ENCODE measurements at regions of chr12 and their contacts with region 1.

Region 1: DNA sequence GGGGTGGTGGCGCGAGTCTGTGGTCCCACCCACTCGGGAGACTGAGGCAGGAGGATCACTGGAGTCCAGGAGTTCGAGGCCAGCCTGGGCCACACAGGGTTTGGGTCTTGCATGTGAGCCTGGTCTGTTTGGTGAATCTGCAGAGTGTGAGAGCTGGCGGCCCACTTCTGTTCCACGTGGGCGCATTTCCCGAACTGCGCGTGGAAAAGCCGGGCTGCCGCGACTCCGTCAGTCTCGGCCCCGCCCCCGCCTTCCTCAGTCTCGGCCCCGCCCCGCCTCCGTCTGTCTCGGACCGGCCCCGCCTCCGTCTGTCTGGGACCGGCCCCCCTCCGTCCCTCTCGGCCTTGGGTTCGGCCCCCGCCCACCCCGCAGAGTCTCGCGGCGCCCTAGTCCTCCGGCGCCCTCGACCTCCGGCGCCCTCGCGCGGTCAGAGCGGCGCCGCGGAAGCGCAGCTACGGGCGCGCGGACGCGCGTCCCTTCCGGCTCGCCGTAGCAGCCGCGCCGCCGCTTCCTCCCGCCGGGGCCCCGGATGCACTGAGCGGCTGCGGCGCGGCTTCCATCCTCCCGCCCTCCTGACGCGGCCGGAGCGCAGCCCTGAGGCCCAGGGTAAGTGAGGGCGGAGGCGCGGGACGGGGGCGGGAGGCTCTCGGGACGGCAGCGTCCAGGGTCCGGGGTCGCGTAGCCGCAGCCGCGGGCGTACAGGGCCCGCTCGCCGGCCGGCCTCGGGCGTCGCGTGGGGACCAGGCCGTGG is at the start of gene EP400:
- DNase-seq: peak; percentile 86 to 92 (median 90)
- H3K4me3 ChIP-seq: peak within 1 kb of the TSS; percentile 52 to 75
- H3K4me3 Mint-ChIP-seq: peak within 1 kb of the TSS; percentile 91 to 95 (median 94)
- H3K27ac ChIP-seq: peak within 1 kb of the TSS; percentile 79
- H3K27ac Mint-ChIP-seq: peak within 1 kb of the TSS; percentile 92 to 97 (median 95)
- H3K4me1 ChIP-seq: peaks cover 50% of the 10 kb centered on the region
- H3K4me1 Mint-ChIP-seq: peaks cover 24 to 55% (median 37%) of the 10 kb centered on the region in 4 donors
- H3K27me3 ChIP-seq: no peaks in the 10 kb centered on the region
- H3K27me3 Mint-ChIP-seq: no peaks in the 10 kb centered on the region
- total RNA-seq, gene EP400: 82.3 to 86.6 TPM

Region 2: DNA sequence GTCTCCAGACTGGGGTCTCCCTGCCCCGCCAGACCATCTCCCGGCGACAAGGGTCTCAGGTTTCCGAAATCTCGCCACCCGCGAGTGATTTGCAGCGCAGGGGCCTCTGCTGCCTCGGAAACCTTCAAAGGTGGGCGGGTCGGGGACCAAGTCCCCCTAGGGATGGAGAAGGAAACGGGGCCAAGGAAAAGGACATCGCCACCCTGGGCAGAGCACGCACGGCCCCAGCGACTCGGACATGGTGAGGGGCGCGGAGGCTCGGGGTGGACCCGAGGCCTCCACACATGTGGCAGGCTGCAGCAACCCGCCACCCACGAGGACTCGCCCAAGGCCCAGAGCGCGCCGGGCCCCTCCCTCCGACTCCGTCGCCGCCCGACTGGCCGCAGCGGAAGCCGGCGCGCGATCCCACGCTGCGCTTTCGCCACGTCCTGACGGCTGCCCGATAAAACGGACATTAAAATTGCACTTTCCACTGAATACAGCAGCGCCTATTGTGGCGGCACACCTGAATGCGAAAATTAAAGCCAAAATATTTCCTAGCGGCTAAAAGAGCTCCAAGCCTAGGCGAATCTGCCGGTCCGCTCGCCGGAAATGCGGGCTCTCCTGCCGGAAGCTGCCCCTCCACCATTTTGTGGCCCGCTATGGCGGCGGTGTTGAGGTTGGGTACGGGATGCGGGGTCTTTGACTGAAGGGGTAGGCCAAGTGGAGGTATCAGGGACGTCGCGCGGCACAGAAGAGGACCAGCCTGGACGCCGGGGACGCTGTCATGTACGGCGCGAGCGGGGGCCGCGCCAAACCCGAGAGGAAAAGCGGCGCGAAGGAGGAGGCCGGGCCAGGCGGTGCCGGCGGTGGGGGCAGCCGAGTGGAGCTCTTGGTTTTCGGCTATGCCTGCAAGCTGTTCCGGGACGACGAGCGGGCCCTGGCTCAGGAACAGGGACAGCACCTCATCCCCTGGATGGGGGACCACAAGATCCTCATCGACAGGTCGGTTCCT is 238.8 kb before region 1 on chr12 and contains the start of gene SFSWAP:
- CTCF ChIA-PET with region 1: no interaction called
- POLR2A ChIA-PET with region 1: interaction called, 7 read pairs
- intact Hi-C with region 1: loop called (anchors 1 kb)
- DNase-seq: peak; percentile 71 to 85 (median 77)
- H3K4me3 ChIP-seq: peak within 1 kb of the TSS; percentile 94 to 99
- H3K4me3 Mint-ChIP-seq: peak within 1 kb of the TSS; percentile 92 to 100 (median 98)
- H3K27ac ChIP-seq: peak within 1 kb of the TSS; percentile 89
- H3K27ac Mint-ChIP-seq: peak within 1 kb of the TSS; percentile 94 to 98 (median 96)
- H3K4me1 ChIP-seq: peaks cover 30% of the 10 kb centered on the region
- H3K4me1 Mint-ChIP-seq: peaks cover 20 to 40% (median 26%) of the 10 kb centered on the region in 4 donors
- H3K27me3 ChIP-seq: no peaks in the 10 kb centered on the region
- H3K27me3 Mint-ChIP-seq: no peaks in the 10 kb centered on the region
- total RNA-seq, gene SFSWAP: 95.7 to 96.8 TPM

Region 3: DNA sequence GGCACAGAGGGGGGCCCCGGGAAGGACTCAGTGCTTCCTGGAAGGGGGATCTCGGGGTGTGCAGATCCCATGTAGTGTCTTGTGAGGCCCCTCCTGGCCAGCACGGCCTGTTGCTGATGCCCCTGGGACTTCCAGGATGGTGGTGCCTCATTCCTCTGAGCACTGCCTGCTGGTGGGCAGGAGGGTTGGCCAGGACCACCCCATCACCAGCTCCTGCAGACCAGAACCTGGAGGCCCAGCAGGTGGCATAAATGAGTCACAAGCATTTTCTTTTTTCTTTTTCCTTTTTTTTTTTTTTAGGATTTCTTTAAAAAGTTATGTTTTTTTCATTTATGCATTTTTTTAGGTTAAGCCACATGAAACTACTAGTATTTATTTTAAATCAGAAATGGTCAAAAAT is 113.4 kb before region 1 on chr12:
- CTCF ChIA-PET with region 1: interaction called, 3 read pairs
- POLR2A ChIA-PET with region 1: no interaction called
- intact Hi-C with region 1: loop called (anchors 1 kb)
- DNase-seq: no peak
- H3K4me3 ChIP-seq: no peak overlapping the region
- H3K4me3 Mint-ChIP-seq: no peak overlapping the region
- H3K27ac ChIP-seq: no peak overlapping the region
- H3K27ac Mint-ChIP-seq: no peak overlapping the region
- H3K4me1 ChIP-seq: no peaks in the 10 kb centered on the region
- H3K4me1 Mint-ChIP-seq: peaks cover 0 to 2% (median under 1%) of the 10 kb centered on the region in 4 donors
- H3K27me3 ChIP-seq: peaks cover 2% of the 10 kb centered on the region
- H3K27me3 Mint-ChIP-seq: peaks cover 8 to 14% of the 10 kb centered on the region in 2 donors

Region 4: GRCh38 chr12:131894313-131894860 is 55.2 kb before region 1 on chr12 and contains the start of gene ULK1:
- CTCF ChIA-PET with region 1: no interaction called
- POLR2A ChIA-PET with region 1: interaction called, 5 read pairs
- intact Hi-C with region 1: loop called (anchors 1 kb)
- DNase-seq: peak; percentile 88 to 94 (median 91)
- H3K4me3 ChIP-seq: peak within 1 kb of the TSS; percentile 62 to 69
- H3K4me3 Mint-ChIP-seq: peak within 1 kb of the TSS; percentile 84 to 93 (median 89)
- H3K27ac ChIP-seq: peak within 1 kb of the TSS; percentile 52
- H3K27ac Mint-ChIP-seq: peak within 1 kb of the TSS; percentile 76 to 94 (median 87)
- H3K4me1 ChIP-seq: peaks cover 9% of the 10 kb centered on the region
- H3K4me1 Mint-ChIP-seq: peaks cover 6 to 35% (median 16%) of the 10 kb centered on the region in 4 donors
- H3K27me3 ChIP-seq: no peaks in the 10 kb centered on the region
- H3K27me3 Mint-ChIP-seq: no peaks in the 10 kb centered on the region
- total RNA-seq, gene ULK1: 45.8 to 55.7 TPM

Region 5: GRCh38 chr12:131928711-131929580 is 20.7 kb before region 1 on chr12 and contains the start of gene PUS1:
- CTCF ChIA-PET with region 1: no interaction called
- POLR2A ChIA-PET with region 1: interaction called, 38 read pairs
- intact Hi-C with region 1: loop called (anchors 1 kb)
- DNase-seq: peak; percentile 94 to 95 (median 95)
- H3K4me3 ChIP-seq: peak within 1 kb of the TSS; percentile 42 to 81
- H3K4me3 Mint-ChIP-seq: peak within 1 kb of the TSS; percentile 89 to 98 (median 90)
- H3K27ac ChIP-seq: peak within 1 kb of the TSS; percentile 72
- H3K27ac Mint-ChIP-seq: peak within 1 kb of the TSS; percentile 87 to 93 (median 90)
- H3K4me1 ChIP-seq: peaks cover 16% of the 10 kb centered on the region
- H3K4me1 Mint-ChIP-seq: peaks cover 8 to 34% (median 23%) of the 10 kb centered on the region in 4 donors
- H3K27me3 ChIP-seq: no peaks in the 10 kb centered on the region
- H3K27me3 Mint-ChIP-seq: no peaks in the 10 kb centered on the region
- total RNA-seq, gene PUS1: 41.8 to 48.1 TPM

Region 6: DNA sequence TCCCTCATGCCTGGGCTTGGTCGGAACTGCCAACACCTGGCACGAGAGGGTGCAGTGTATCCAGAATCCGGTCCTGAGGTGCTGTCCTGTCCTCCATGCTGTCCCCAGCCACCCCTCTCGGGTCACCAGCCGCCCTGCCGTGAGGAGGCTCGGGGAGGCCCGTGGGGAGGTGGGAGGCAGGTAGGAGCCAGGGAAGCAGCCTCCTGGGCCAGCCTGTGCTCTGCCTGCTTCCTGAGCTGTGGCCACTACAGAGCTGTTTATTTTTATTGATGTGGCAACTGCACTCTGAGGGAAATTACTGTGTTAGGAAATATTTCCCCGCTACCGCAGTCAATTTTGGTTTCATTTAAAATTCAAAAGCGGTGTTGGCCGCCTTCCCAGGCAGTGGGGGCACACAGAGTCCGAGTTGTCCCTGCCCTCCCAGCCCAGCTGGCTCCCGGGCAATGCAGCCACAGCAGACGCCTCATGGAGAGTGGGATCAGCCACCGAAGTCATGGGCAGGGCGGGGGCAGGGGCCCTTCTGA is 213.0 kb after region 1 on chr12:
- CTCF ChIA-PET with region 1: no interaction called
- POLR2A ChIA-PET with region 1: no interaction called
- intact Hi-C with region 1: no loop called
- DNase-seq: peak in 4 of 5 donors; percentile 32 to 53 (median 45)
- H3K4me3 ChIP-seq: peak overlapping the region in 1 of 2 donors; percentile 19
- H3K4me3 Mint-ChIP-seq: peak overlapping the region in 3 of 8 donors; percentile 52 to 74 (median 58)
- H3K27ac ChIP-seq: no peak overlapping the region
- H3K27ac Mint-ChIP-seq: peak overlapping the region in 1 of 7 donors; percentile 57
- H3K4me1 ChIP-seq: peaks cover 22% of the 10 kb centered on the region
- H3K4me1 Mint-ChIP-seq: peaks cover 10 to 19% (median 15%) of the 10 kb centered on the region in 4 donors
- H3K27me3 ChIP-seq: no peaks in the 10 kb centered on the region
- H3K27me3 Mint-ChIP-seq: no peaks in the 10 kb centered on the region